B cell (primary cell): ENCODE measurements at regions of chr16 and their contacts with region 1.

Region 1: GRCh38 chr16:81481207-81481821 is 36.7 kb downstream of the CMIP start:
- DNase-seq: peak; percentile 90
- ATAC-seq: peak; percentile 79
- H3K4me3 ChIP-seq: peak overlapping the region; percentile 8 to 53 (median 21)
- H3K4me3 Mint-ChIP-seq: peak overlapping the region; percentile 87
- H3K27ac ChIP-seq: peak overlapping the region; percentile 92 to 95
- H3K27ac Mint-ChIP-seq: peak overlapping the region; percentile 91
- H3K4me1 ChIP-seq: peaks cover 73 to 78% of the 10 kb centered on the region in 2 donors
- H3K4me1 Mint-ChIP-seq: peaks cover 86% of the 10 kb centered on the region
- H3K27me3 ChIP-seq: no peaks in the 10 kb centered on the region
- H3K27me3 Mint-ChIP-seq: no peaks in the 10 kb centered on the region
- CTCF ChIP-seq: no peak

Region 2: GRCh38 chr16:81384006-81384405 is 97.3 kb before region 1 on chr16:
- CTCF ChIA-PET with region 1: no interaction called
- POLR2A ChIA-PET with region 1: no interaction called
- intact Hi-C with region 1: no loop called
- DNase-seq: no peak
- ATAC-seq: no peak
- H3K4me3 ChIP-seq: no peak overlapping the region
- H3K4me3 Mint-ChIP-seq: no peak overlapping the region
- H3K27ac ChIP-seq: no peak overlapping the region
- H3K27ac Mint-ChIP-seq: no peak overlapping the region
- H3K4me1 ChIP-seq: no peaks in the 10 kb centered on the region
- H3K4me1 Mint-ChIP-seq: no peaks in the 10 kb centered on the region
- H3K27me3 ChIP-seq: no peaks in the 10 kb centered on the region
- H3K27me3 Mint-ChIP-seq: no peaks in the 10 kb centered on the region
- CTCF ChIP-seq: no peak

Region 3: GRCh38 chr16:81429045-81429521 is 52.2 kb before region 1 on chr16:
- CTCF ChIA-PET with region 1: interaction called, 14 read pairs
- POLR2A ChIA-PET with region 1: no interaction called
- intact Hi-C with region 1: no loop called
- DNase-seq: peak; percentile 53
- ATAC-seq: peak; percentile 37
- H3K4me3 ChIP-seq: no peak overlapping the region
- H3K4me3 Mint-ChIP-seq: no peak overlapping the region
- H3K27ac ChIP-seq: no peak overlapping the region
- H3K27ac Mint-ChIP-seq: peak overlapping the region; percentile 48
- H3K4me1 ChIP-seq: peaks cover 17 to 22% of the 10 kb centered on the region in 2 donors
- H3K4me1 Mint-ChIP-seq: peaks cover 38% of the 10 kb centered on the region
- H3K27me3 ChIP-seq: no peaks in the 10 kb centered on the region
- H3K27me3 Mint-ChIP-seq: no peaks in the 10 kb centered on the region
- CTCF ChIP-seq: peak; percentile 60

Region 4: DNA sequence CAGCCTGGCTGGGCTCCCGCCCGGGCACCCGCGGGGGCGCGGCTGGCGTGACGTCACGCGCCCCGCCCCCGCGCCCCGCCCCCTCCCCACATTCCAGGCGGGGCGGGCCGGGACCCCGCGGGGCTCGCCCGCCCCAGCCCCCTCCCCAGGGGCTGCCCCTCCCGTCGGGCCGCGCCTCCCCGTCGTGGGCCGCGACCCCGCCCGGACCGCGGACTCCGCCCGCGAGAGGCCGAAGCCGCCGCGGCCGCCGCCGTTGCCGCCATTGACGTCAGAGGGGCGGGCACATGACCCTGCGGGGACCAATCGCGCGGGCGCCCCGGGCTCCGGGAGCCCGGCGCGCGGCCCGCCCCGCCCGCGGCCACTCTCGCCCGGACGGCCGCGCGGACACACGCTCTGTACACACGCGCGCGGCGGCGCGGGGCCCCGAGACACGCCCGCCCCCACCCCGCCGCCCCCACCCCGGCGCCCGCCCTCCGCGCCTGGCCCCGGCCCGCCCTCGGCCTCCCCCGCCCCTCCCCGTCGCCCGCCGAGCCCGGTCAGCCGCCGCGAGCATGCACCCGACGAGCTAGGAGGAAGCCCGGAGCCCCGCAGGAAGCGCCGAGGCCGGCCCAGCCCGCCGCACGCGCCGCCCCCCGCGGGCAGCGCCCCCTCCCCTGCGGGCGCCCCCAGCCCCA is 36.7 kb before region 1 on chr16 and contains the start of gene CMIP:
- CTCF ChIA-PET with region 1: interaction called, 13 read pairs
- POLR2A ChIA-PET with region 1: interaction called, 12 read pairs
- intact Hi-C with region 1: loop called (anchors 1 kb)
- DNase-seq: peak; percentile 91
- ATAC-seq: peak; percentile 85
- H3K4me3 ChIP-seq: peak within 1 kb of the TSS; percentile 68 to 90 (median 80)
- H3K4me3 Mint-ChIP-seq: peak within 1 kb of the TSS; percentile 91
- H3K27ac ChIP-seq: peak within 1 kb of the TSS; percentile 57 to 77
- H3K27ac Mint-ChIP-seq: peak within 1 kb of the TSS; percentile 91
- H3K4me1 ChIP-seq: peaks cover 36 to 47% of the 10 kb centered on the region in 2 donors
- H3K4me1 Mint-ChIP-seq: peaks cover 43% of the 10 kb centered on the region
- H3K27me3 ChIP-seq: no peaks in the 10 kb centered on the region
- H3K27me3 Mint-ChIP-seq: no peaks in the 10 kb centered on the region
- CTCF ChIP-seq: no peak
- total RNA-seq, gene CMIP: 155 and 168 TPM in 2 replicates

Region 5: DNA sequence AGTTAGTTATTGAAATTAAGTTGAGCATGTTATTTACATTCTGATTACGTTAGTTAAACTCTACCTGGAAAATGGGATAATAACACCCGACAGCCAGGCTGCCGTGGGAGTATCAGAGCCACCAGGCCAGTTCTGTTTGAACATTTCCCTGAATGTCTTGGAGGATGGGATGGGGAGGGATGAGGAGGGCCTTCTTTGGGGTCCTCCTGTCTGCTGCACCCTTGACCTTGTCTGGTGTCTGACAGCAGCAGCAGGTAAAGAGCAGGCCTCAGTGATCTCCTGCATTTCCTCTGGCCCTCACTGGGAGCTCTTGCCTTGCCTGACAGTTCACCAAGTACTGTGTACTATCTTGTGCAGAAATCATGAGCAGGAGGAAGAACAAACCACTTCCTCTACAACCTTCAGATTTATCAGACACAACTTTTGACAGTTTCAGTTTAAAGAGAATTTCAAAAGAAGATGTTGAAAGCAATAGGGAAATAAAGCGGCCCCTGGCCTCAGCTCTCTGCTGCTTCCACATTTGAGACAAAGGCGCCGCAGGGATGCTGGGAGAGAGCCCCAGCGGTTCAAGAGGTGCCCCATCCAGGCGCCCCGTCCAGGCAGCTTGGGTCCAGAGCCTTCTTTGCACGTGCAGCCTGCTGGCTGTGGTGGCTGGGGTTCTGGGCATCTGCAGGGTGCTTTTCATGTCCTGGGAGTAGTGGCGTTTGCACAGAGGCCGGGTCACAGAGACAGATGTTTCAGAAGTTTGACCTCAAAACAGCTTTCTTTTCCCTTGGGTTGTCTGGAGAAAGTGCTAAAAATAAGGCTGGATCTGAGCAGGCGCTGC is 11.4 kb before region 1 on chr16:
- CTCF ChIA-PET with region 1: interaction called, 11 read pairs
- POLR2A ChIA-PET with region 1: interaction called, 4 read pairs
- intact Hi-C with region 1: loop called (anchors 1 kb)
- DNase-seq: peak; percentile 71
- ATAC-seq: peak; percentile 92
- H3K4me3 ChIP-seq: peak overlapping the region; percentile 12 to 37 (median 29)
- H3K4me3 Mint-ChIP-seq: peak overlapping the region; percentile 80
- H3K27ac ChIP-seq: peak overlapping the region; percentile 39 to 82
- H3K27ac Mint-ChIP-seq: peak overlapping the region; percentile 89
- H3K4me1 ChIP-seq: peaks cover 48 to 66% of the 10 kb centered on the region in 2 donors
- H3K4me1 Mint-ChIP-seq: peaks cover 80% of the 10 kb centered on the region
- H3K27me3 ChIP-seq: no peaks in the 10 kb centered on the region
- H3K27me3 Mint-ChIP-seq: no peaks in the 10 kb centered on the region
- CTCF ChIP-seq: no peak

Region 6: DNA sequence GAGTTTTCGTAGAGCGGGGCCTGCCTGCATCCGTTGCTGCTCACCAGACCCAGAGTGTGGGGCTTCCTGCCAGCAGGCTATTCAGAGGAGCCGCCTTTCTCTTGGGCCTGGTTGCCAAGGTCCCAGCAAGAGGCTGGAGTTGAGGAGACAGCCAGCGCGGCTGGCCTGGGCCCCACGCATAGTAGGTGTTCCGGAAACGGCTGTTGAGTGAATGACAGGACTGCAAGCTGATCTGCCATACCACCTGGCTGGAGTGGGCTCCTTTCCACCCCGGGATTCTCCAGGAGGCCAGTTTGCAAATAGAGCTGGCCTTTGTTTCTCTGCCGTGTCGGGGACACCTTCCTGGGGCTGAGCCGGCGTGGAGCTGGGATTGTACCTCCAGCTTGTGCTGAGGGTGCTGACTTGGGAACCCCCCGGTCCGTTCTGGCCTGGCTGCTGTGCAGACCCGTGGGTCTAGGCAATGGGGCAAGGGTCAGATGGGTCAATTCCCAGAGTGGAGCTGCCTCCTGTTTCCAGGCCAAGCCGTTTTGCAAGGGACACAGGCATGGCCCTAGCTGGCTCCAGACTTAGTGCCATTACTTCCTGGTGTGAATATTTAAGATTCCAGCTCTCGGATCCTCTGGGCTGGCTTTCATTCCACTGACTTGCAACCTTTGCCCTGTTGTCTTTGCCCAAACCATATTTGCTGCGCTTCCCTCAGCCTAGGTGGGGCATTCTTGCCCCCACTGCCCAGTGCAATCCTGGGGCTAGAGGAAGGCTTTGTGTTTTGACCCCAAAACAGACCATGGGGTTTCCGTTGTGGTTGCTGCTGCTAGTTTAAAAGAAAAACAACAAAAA is 32.1 kb after region 1 on chr16:
- CTCF ChIA-PET with region 1: interaction called, 7 read pairs
- POLR2A ChIA-PET with region 1: interaction called, 5 read pairs
- intact Hi-C with region 1: loop called (anchors 1 kb)
- DNase-seq: no peak
- ATAC-seq: peak; percentile 40
- H3K4me3 ChIP-seq: peak overlapping the region in 2 of 5 experiments; percentile 30 to 35
- H3K4me3 Mint-ChIP-seq: peak overlapping the region; percentile 81
- H3K27ac ChIP-seq: peak overlapping the region; percentile 43 to 59
- H3K27ac Mint-ChIP-seq: peak overlapping the region; percentile 88
- H3K4me1 ChIP-seq: peaks cover 34 to 41% of the 10 kb centered on the region in 2 donors
- H3K4me1 Mint-ChIP-seq: peaks cover 53% of the 10 kb centered on the region
- H3K27me3 ChIP-seq: no peaks in the 10 kb centered on the region
- H3K27me3 Mint-ChIP-seq: no peaks in the 10 kb centered on the region
- CTCF ChIP-seq: no peak

Region 7: GRCh38 chr16:81623363-81624102 is 142.2 kb after region 1 on chr16:
- CTCF ChIA-PET with region 1: interaction called, 11 read pairs
- POLR2A ChIA-PET with region 1: no interaction called
- intact Hi-C with region 1: no loop called
- DNase-seq: peak; percentile 70
- ATAC-seq: peak; percentile 34
- H3K4me3 ChIP-seq: no peak overlapping the region
- H3K4me3 Mint-ChIP-seq: no peak overlapping the region
- H3K27ac ChIP-seq: no peak overlapping the region
- H3K27ac Mint-ChIP-seq: no peak overlapping the region
- H3K4me1 ChIP-seq: peaks cover 5 to 11% of the 10 kb centered on the region in 2 donors
- H3K4me1 Mint-ChIP-seq: peaks cover 16% of the 10 kb centered on the region
- H3K27me3 ChIP-seq: no peaks in the 10 kb centered on the region
- H3K27me3 Mint-ChIP-seq: no peaks in the 10 kb centered on the region
- CTCF ChIP-seq: peak; percentile 65

Region 8: DNA sequence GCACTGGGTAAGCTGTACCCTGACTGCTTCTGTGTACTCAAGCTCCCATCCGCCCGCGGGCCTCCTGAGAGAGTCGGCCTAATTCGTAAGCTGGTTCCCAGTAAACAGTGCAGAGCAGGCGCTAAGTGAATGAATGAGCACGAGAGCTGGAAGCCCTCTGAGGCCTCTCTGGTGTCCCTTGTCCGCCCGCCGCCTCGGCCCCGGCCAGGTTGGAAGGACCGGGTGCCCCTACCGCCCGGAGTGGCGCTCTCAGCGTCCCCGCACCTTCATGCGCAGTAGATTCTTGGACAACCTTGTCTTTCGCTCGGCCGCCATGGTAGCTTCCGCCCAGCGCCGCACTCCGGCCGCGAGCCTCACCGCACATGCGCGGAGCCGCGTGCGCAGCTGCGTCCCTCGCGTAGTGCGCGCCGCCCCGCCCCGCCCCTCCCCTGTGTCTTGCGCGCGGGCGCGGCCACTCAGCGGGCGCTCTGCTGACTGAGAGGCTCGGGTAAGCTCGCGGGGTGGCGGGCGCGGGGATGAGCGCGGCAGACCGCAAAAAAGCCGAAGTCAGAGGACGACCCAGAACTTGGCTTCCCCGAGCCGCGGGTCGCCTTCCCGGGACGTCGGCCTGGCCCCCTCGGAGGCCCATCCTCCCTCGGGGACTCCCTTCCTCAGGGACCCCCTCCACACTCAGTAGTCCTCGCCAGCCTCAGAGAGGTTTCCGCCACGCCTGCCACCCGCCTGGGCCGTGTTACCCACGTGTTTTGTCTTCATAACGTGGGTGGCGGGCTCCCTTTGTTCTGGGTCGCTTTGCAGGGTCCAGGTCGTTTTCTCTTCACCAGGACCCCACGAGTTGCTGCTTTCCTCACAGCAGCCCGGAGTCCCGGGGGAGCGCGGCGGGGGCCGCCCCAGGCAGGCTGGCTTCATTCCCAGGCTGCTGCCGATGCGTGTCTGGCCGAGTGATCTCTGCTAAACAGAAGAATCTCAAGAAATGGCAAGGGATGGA is 688.8 kb after region 1 on chr16 and contains the start of gene MPHOSPH6:
- CTCF ChIA-PET with region 1: no interaction called
- POLR2A ChIA-PET with region 1: no interaction called
- intact Hi-C with region 1: loop called (anchors 10 kb)
- DNase-seq: peak; percentile 95
- ATAC-seq: peak; percentile 97
- H3K4me3 ChIP-seq: peak within 1 kb of the TSS; percentile 68 to 88 (median 82)
- H3K4me3 Mint-ChIP-seq: peak within 1 kb of the TSS; percentile 98
- H3K27ac ChIP-seq: peak within 1 kb of the TSS; percentile 64 to 67
- H3K27ac Mint-ChIP-seq: peak within 1 kb of the TSS; percentile 96
- H3K4me1 ChIP-seq: peaks cover 10 to 15% of the 10 kb centered on the region in 2 donors
- H3K4me1 Mint-ChIP-seq: peaks cover 24% of the 10 kb centered on the region
- H3K27me3 ChIP-seq: peaks cover 2 to 24% (median 21%) of the 10 kb centered on the region in 4 experiments
- H3K27me3 Mint-ChIP-seq: peaks cover 28% of the 10 kb centered on the region
- CTCF ChIP-seq: no peak
- total RNA-seq, gene MPHOSPH6: 20.4 and 26.7 TPM in 2 replicates